ENCODE measurements at regions of chr13 and their contacts with region 1.

Region 1: DNA sequence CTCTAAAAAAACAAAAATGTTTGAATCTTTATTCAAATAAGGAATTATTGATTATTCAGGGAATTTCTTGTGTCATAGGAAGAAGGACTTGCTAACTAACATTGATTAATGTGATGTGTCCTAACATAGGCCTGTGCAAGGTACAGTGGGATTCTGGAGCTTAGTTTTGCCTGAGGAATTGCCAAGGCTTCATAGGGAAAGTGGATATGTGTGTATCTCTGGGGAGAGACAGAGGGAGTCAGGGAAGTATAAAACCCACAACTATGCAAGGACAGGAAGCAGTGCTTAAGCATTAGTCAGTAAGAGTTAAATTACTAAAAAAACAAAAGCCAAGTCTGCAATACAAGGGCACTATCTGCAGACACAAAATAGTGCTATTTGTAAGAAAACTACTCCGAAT is 59.6 kb downstream of the WDFY2 start:
- DNase-seq: peak; percentile 88
- H3K4me3 ChIP-seq: peak overlapping the region; percentile 14
- H3K27ac ChIP-seq: peak overlapping the region; percentile 81
- H3K4me1 ChIP-seq: peaks cover 73% of the 10 kb centered on the region
- H3K27me3 ChIP-seq: no peaks in the 10 kb centered on the region
- CTCF ChIP-seq: no peak

Region 2: GRCh38 chr13:51465124-51465523 is 178.8 kb before region 1 on chr13:
- CTCF ChIA-PET with region 1: no interaction called
- POLR2A ChIA-PET with region 1: interaction called, 19 read pairs
- intact Hi-C with region 1: no loop called
- DNase-seq: no peak
- H3K4me3 ChIP-seq: no peak overlapping the region
- H3K27ac ChIP-seq: no peak overlapping the region
- H3K4me1 ChIP-seq: peaks cover 4% of the 10 kb centered on the region
- H3K27me3 ChIP-seq: no peaks in the 10 kb centered on the region
- CTCF ChIP-seq: no peak